CD8-positive, alpha-beta T cell (primary cell): ENCODE measurements at regions of chr9 and their contacts with region 1.

Region 1: DNA sequence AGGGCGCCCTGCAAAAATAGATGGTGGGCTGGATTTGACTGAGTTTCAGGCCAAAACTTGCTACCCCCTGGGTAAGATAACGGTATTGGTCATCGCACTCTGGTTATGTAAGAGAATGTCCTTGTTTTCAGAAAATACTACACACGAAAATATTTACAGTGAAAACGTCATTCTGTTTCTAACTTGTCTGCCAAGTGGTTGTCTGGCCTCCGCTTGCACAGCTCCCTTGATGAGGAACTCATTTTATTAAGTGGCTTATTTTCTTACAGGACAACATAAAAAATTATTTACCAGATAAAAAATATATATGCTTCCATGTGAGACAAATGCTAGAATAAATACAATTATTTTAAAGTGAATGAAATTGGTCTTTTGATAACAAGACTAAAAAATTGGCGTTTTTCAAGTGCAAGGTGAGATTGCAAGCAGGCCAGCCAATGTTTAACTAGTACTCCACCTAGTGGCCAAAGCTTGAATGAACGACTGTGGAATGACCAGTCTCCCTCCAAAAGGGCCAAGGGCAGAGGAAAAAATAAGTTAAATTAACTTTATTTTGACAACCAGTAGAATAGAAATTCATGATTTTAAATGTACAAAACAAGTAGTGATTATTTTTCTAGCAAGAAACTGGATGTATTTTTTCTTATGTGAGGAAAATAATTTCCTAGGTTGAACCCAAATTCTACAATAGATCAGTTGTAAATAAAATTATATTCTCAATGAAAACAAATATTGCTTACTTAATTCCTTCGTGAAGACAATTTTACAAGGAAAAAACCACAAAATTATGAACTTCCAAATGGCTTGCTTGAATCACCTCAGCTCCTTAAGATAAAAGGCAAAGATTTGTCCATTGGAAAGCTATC is 93.2 kb downstream of the ZFAND5 start:
- DNase-seq: peak in 6 of 9 experiments; percentile 19 to 65 (median 48)
- ATAC-seq: peak; percentile 44
- H3K4me3 ChIP-seq: no peak overlapping the region
- H3K4me3 Mint-ChIP-seq: no peak overlapping the region
- H3K27ac ChIP-seq: no peak overlapping the region
- H3K27ac Mint-ChIP-seq: no peak overlapping the region
- H3K4me1 ChIP-seq: no peaks in the 10 kb centered on the region
- H3K4me1 Mint-ChIP-seq: no peaks in the 10 kb centered on the region
- H3K27me3 ChIP-seq: no peaks in the 10 kb centered on the region
- H3K27me3 Mint-ChIP-seq: peaks cover 2% of the 10 kb centered on the region
- CTCF ChIP-seq: peak; percentile 88

Region 2: GRCh38 chr9:70639853-70640814 is 1631.7 kb before region 1 on chr9:
- CTCF ChIA-PET with region 1: interaction called, 3 read pairs
- POLR2A ChIA-PET with region 1: no interaction called
- intact Hi-C with region 1: loop called in 1 of 2 experiments (anchors 2 kb)
- DNase-seq: peak in 2 of 9 experiments; percentile 30 to 33
- ATAC-seq: no peak
- H3K4me3 ChIP-seq: no peak overlapping the region
- H3K4me3 Mint-ChIP-seq: no peak overlapping the region
- H3K27ac ChIP-seq: no peak overlapping the region
- H3K27ac Mint-ChIP-seq: no peak overlapping the region
- H3K4me1 ChIP-seq: no peaks in the 10 kb centered on the region
- H3K4me1 Mint-ChIP-seq: no peaks in the 10 kb centered on the region
- H3K27me3 ChIP-seq: no peaks in the 10 kb centered on the region
- H3K27me3 Mint-ChIP-seq: peaks cover 25% of the 10 kb centered on the region
- CTCF ChIP-seq: peak; percentile 42

Region 3: DNA sequence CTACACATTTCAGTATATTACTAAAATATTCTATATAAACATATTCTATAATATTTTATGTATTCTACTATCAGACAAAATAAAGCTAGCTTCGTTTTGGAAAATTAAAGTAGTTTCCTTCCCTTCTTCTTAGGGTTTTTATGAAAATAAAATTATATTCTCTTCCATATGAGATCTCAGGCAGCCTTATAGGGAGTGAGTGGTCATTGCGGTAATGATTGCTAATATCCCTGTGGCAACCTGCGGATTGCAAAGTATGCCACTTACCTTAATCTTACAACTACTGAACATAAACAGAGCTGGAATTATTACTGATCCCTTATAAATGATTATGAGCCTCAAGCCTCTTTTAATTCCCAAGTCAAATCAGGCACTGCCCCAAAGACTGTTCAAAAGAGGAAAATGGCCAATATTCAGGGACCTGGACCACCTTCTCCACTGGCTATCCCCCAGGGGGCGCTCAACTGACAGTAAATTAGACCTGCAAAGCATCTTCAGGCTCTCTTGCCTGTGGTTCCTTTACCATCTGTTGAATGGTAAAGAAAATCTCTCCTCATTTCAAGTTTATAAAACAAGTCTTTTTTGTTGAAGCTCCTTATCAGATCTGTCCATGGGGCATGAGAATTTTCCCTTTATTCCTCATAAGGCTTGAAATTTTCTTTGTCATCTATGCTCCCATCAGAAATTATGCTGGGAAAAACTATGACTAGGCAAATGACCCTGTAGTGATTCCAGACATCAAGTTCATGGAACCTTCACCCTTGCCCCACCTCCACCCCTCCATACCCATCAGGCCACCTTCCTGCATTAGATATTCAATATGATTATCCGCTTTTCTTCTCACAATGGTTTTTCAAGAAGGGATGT is 667.4 kb before region 1 on chr9:
- CTCF ChIA-PET with region 1: interaction called, 8 read pairs
- POLR2A ChIA-PET with region 1: no interaction called
- intact Hi-C with region 1: loop called in 1 of 2 experiments (anchors 2 kb)
- DNase-seq: peak; percentile 57 to 88 (median 79)
- ATAC-seq: peak; percentile 66
- H3K4me3 ChIP-seq: no peak overlapping the region
- H3K4me3 Mint-ChIP-seq: no peak overlapping the region
- H3K27ac ChIP-seq: no peak overlapping the region
- H3K27ac Mint-ChIP-seq: no peak overlapping the region
- H3K4me1 ChIP-seq: no peaks in the 10 kb centered on the region
- H3K4me1 Mint-ChIP-seq: no peaks in the 10 kb centered on the region
- H3K27me3 ChIP-seq: no peaks in the 10 kb centered on the region
- H3K27me3 Mint-ChIP-seq: no peaks in the 10 kb centered on the region
- CTCF ChIP-seq: peak; percentile 81

Region 4: GRCh38 chr9:72038890-72039410 is 232.9 kb before region 1 on chr9:
- CTCF ChIA-PET with region 1: interaction called, 30 read pairs
- POLR2A ChIA-PET with region 1: interaction called, 3 read pairs
- intact Hi-C with region 1: loop called in 1 of 2 experiments (anchors 1 kb)
- DNase-seq: peak; percentile 22 to 78 (median 61)
- ATAC-seq: peak; percentile 67
- H3K4me3 ChIP-seq: no peak overlapping the region
- H3K4me3 Mint-ChIP-seq: no peak overlapping the region
- H3K27ac ChIP-seq: no peak overlapping the region
- H3K27ac Mint-ChIP-seq: no peak overlapping the region
- H3K4me1 ChIP-seq: no peaks in the 10 kb centered on the region
- H3K4me1 Mint-ChIP-seq: peaks cover 5% of the 10 kb centered on the region
- H3K27me3 ChIP-seq: no peaks in the 10 kb centered on the region
- H3K27me3 Mint-ChIP-seq: peaks cover 16% of the 10 kb centered on the region
- CTCF ChIP-seq: peak; percentile 87

Region 5: DNA sequence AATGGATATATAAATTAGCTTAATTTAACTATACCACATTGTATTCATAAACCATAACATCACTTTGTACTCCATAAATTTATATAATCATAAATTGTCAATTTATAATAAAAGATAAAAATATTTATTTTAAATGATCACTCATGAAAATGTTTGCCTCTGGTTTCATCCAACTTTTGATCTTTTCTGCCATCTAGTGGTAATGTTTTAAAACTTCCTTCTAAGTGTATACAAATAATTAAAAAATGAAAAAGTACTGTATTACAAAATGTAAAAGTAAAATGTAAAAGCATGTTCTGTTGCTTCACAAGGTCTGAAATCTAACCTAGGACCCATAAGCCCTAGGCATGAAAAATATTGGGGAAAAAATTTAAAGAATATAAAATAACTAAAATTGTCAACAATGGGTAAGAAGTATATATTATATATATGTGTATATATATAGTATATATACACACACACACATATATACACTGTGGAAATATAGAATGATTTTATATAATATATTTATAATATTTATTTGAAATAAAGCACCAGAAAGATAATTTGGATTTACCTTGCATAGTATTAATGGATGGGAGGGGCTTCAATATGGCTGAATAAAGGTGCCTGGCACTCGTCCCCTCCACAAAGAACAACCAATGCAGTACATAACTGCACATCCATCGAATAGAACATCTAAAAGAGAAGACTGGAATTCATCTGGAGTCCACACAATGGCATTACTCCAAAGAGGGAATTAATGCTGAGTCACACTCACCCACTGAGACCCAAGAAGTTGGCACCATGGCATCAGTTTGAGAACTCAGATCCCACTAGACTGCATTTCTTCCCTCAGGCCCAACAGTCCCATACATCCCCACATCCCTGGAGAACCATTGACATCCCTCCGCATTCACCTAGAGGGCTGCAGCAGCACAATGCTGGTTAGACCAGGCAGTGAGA is 912.3 kb after region 1 on chr9:
- CTCF ChIA-PET with region 1: no interaction called
- POLR2A ChIA-PET with region 1: no interaction called
- intact Hi-C with region 1: loop called in 1 of 2 experiments (anchors 10 kb)
- DNase-seq: peak in 2 of 9 experiments; percentile 63 to 75
- ATAC-seq: no peak
- H3K4me3 ChIP-seq: no peak overlapping the region
- H3K4me3 Mint-ChIP-seq: no peak overlapping the region
- H3K27ac ChIP-seq: no peak overlapping the region
- H3K27ac Mint-ChIP-seq: no peak overlapping the region
- H3K4me1 ChIP-seq: no peaks in the 10 kb centered on the region
- H3K4me1 Mint-ChIP-seq: no peaks in the 10 kb centered on the region
- H3K27me3 ChIP-seq: peaks cover 0 to 2% of the 10 kb centered on the region in 2 experiments
- H3K27me3 Mint-ChIP-seq: peaks cover 3% of the 10 kb centered on the region
- CTCF ChIP-seq: peak; percentile 91